CD8-positive, alpha-beta memory T cell (primary cell): ENCODE measurements at regions of chr14 and their contacts with region 1.

Region 1: DNA sequence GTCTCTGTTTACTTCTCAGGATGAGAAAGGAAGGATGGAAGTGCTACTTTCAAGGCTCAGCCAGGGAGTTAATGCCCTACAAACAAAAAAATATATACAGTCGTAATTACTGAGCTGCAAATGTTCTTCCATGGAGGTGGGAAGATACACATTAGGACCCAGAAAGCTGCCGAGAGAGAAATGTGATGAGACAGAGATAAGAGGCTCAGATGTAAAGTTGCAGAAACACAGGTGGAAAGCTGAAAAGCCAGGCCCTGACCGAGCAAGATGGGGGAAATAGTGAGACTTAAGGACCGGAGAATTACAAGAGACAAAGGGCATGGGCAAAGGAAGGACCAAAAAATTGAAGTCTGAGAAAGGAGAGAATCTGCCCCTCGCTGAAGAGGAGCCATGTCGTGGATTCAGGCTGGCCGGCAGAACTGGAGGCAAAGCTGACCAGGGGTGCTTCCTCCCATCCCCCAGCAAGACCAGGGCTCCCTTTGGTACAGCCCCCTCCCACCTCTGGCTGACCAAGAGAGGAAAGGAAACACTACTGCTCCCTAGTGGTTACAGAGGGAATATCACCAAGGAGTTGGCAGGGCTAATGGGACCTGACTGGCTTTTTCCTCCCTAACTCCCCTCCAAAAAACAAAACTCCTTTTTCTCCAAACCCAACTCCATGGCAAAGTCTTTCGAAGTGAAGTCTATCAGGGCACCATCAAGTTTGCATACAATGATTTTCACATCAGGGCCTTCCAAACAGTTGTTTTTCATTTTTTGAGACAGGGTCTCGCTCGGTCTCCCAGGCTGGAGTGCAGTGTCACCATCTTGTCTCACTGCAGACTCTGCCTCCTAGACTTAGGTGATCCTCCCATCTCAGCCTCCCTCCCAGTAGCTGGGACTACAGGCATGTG is 12.1 kb downstream of the ZFHX2 start:
- DNase-seq: peak in 3 of 5 donors; percentile 23 to 51 (median 42)
- H3K4me3 ChIP-seq: no peak overlapping the region
- H3K4me3 Mint-ChIP-seq: no peak overlapping the region
- H3K27ac ChIP-seq: no peak overlapping the region
- H3K27ac Mint-ChIP-seq: no peak overlapping the region
- H3K4me1 ChIP-seq: no peaks in the 10 kb centered on the region
- H3K4me1 Mint-ChIP-seq: no peaks in the 10 kb centered on the region
- H3K27me3 ChIP-seq: no peaks in the 10 kb centered on the region
- H3K27me3 Mint-ChIP-seq: peaks cover 3% of the 10 kb centered on the region in 2 donors

Region 2: GRCh38 chr14:23183479-23183878 is 356.0 kb before region 1 on chr14 and contains the start of gene SLC7A8:
- CTCF ChIA-PET with region 1: no interaction called
- POLR2A ChIA-PET with region 1: no interaction called
- DNase-seq: peak in 1 of 5 donors; percentile 45
- H3K4me3 ChIP-seq: peak within 1 kb of the TSS; percentile 71
- H3K4me3 Mint-ChIP-seq: no peak within 1 kb of the TSS
- H3K27ac ChIP-seq: no peak within 1 kb of the TSS
- H3K27ac Mint-ChIP-seq: no peak within 1 kb of the TSS
- H3K4me1 ChIP-seq: peaks cover 9% of the 10 kb centered on the region
- H3K4me1 Mint-ChIP-seq: peaks cover 0 to 3% (median 0%) of the 10 kb centered on the region in 3 donors
- H3K27me3 ChIP-seq: peaks cover 4% of the 10 kb centered on the region
- H3K27me3 Mint-ChIP-seq: peaks cover 12 to 30% of the 10 kb centered on the region in 2 donors
- total RNA-seq, gene SLC7A8: 1.4 to 2.5 TPM

Region 3: DNA sequence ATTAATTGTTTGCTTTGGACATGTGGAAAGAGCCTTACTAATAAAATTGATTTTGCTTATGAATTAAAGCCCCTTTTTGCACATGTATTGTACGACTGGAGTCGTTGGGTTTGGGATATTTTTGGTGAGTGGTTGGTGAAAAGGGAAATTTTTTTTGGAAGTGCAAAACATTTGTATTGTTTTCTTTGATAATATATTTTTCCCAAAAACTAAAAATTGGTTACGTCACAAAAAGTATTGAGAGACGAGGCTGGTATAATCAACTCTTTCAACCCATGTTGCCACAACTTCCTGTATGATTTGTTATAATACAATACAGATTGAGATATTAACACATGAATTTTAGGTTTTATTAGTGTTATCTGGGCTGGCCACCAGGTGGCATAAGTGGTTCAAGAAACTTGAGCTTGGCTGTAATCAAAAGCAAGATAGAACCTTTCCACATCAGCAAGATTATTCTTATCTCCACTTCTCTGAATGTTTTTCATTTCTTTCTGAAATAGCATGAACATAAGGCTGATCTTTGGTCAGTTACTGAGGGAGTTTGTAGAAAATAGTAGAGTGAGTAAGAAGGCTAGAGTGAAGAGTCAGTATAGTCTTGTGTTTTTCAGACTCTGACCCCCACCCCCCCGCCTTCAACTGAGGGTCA is 61.3 kb before region 1 on chr14:
- CTCF ChIA-PET with region 1: interaction called, 10 read pairs
- POLR2A ChIA-PET with region 1: no interaction called
- DNase-seq: peak; percentile 46 to 73 (median 55)
- H3K4me3 ChIP-seq: no peak overlapping the region
- H3K4me3 Mint-ChIP-seq: no peak overlapping the region
- H3K27ac ChIP-seq: no peak overlapping the region
- H3K27ac Mint-ChIP-seq: peak overlapping the region in 6 of 8 donors; percentile 30 to 91 (median 70)
- H3K4me1 ChIP-seq: no peaks in the 10 kb centered on the region
- H3K4me1 Mint-ChIP-seq: peaks cover 6 to 10% (median 10%) of the 10 kb centered on the region in 3 donors
- H3K27me3 ChIP-seq: no peaks in the 10 kb centered on the region
- H3K27me3 Mint-ChIP-seq: no peaks in the 10 kb centered on the region

Region 4: GRCh38 chr14:23646648-23647549 is 107.4 kb after region 1 on chr14:
- CTCF ChIA-PET with region 1: no interaction called
- POLR2A ChIA-PET with region 1: no interaction called
- DNase-seq: no peak
- H3K4me3 ChIP-seq: no peak overlapping the region
- H3K4me3 Mint-ChIP-seq: no peak overlapping the region
- H3K27ac ChIP-seq: no peak overlapping the region
- H3K27ac Mint-ChIP-seq: peak overlapping the region in 1 of 8 donors; percentile 80
- H3K4me1 ChIP-seq: no peaks in the 10 kb centered on the region
- H3K4me1 Mint-ChIP-seq: no peaks in the 10 kb centered on the region
- H3K27me3 ChIP-seq: no peaks in the 10 kb centered on the region
- H3K27me3 Mint-ChIP-seq: peaks cover 3 to 17% of the 10 kb centered on the region in 2 donors